Lower leg skin (tissue), 4 donors: ENCODE measurements at regions of chr5 and their contacts with region 1.

Region 1: GRCh38 chr5:170434966-170435605 is 45.9 kb upstream of the KCNMB1 start:
- DNase-seq: peak; percentile 35 to 91
- H3K4me3 ChIP-seq: no peak overlapping the region
- CTCF ChIP-seq: peak in 1 of 3 donors; percentile 77
- POLR2A ChIP-seq: no peak

Region 2: DNA sequence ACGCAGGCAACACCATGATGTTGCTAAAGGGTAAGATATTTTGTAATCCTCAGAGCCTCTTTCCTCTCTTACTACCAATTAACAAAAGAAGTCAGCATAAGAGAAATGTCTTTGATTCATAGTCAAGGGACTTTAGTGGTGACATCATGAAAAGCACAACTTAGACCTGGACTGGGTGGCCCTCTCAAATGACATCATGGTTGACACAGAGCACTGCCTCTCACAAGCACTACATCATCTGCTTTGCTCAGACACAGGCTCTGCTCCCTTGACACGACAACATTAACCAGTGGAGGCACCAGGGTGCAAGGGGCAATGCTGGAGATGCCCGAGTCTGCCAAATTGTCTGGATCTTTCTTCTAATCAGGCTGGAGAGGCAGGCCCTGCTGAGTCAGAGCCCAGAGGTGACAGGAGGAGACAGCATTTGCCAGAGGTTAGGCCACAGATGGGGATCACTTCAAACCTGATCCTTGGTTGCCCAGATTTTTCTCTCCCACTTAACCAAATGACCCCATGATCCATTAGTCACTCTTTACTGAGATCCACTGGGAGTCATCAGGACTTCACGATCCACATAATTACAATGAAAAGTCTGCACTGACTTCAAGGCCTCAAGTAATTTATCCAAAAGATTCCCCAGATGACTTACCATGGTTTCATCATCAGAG is 1308.6 kb before region 1 on chr5:
- intact Hi-C with region 1: no loop called
- DNase-seq: no peak
- H3K4me3 ChIP-seq: no peak overlapping the region
- CTCF ChIP-seq: no peak
- POLR2A ChIP-seq: no peak

Region 3: DNA sequence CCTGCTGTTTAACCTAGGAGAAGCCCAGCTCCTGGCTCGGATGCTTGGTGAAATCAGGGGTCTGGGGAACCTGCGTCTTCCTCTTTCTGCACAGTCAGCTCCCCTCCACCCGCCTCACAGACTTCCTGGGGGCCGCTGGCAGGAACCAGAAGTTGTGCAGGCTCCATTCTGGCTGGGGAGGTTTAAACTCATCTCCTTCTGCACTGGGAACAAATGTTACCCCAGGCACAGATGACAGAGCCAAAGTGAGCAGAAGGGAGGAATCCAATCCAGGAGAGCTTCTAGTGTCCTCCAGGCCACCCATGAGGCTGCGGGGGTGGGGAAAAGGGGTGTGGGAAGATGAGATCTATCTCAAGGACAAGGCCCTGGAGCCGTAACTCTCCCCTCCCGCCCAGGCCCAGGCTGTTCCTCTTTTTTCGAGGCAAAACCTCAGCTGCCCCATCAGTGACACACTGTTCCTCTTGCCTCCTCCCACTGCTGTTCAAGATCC is 77.1 kb before region 1 on chr5:
- intact Hi-C with region 1: no loop called
- DNase-seq: peak; percentile 69 to 92
- H3K4me3 ChIP-seq: no peak overlapping the region
- CTCF ChIP-seq: no peak
- POLR2A ChIP-seq: no peak

Region 4: DNA sequence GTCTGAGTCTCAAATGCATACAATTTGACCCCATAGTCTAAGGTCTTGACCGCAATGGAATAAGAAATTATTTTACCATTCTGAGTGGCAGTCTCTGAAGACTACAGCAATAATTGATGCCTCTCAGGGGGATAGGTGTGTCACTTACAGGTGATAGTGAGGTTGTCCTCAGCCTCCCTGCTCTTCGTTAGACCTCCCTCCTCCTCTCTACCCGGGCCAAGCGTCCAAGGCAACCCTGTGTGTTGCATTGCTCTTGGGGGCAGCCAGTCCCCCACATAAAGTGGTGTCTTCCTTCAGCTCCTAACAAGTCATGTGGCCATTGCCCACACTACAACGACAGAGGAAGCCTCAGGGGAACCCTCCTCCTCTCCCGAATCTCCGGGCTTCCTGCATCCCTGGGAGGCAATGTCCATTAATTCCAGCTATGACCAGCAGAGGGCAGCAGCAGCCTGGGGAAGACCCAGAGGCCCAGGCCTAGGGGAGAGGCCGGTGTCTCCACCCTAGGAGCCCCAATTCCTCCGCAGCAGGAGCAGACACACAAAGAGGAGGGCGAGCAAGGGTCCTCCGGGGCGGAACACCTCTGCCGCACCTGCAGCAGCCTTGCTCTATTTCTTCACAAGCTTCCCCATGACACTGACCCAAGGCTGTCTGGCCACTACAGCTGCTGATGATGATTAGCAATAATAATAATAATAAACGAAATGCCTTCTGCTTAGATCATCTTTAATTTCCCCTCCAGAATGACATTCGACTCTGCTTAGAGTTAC is 203.6 kb after region 1 on chr5:
- intact Hi-C with region 1: loop called (anchors 5 kb)
- DNase-seq: peak in 1 of 2 donors; percentile 91
- H3K4me3 ChIP-seq: no peak overlapping the region
- CTCF ChIP-seq: peak in 1 of 3 donors; percentile 41
- POLR2A ChIP-seq: no peak